ENCODE measurements at regions of chr19 and their contacts with region 1.

Region 1: GRCh38 chr19:19540715-19541440 is 2.8 kb downstream of the CILP2 start:
- DNase-seq: peak in 3 of 6 donors; percentile 35 to 68 (median 55)
- ATAC-seq: peak; percentile 43 to 59 (median 44)
- H3K4me3 ChIP-seq: peak overlapping the region in 1 of 4 donors; percentile 32
- H3K27ac ChIP-seq: no peak overlapping the region
- H3K4me1 ChIP-seq: peaks cover 0 to 15% (median 0%) of the 10 kb centered on the region in 3 donors
- H3K27me3 ChIP-seq: peaks cover 0 to 14% (median 0%) of the 10 kb centered on the region in 4 donors
- CTCF ChIP-seq: no peak

Region 2: DNA sequence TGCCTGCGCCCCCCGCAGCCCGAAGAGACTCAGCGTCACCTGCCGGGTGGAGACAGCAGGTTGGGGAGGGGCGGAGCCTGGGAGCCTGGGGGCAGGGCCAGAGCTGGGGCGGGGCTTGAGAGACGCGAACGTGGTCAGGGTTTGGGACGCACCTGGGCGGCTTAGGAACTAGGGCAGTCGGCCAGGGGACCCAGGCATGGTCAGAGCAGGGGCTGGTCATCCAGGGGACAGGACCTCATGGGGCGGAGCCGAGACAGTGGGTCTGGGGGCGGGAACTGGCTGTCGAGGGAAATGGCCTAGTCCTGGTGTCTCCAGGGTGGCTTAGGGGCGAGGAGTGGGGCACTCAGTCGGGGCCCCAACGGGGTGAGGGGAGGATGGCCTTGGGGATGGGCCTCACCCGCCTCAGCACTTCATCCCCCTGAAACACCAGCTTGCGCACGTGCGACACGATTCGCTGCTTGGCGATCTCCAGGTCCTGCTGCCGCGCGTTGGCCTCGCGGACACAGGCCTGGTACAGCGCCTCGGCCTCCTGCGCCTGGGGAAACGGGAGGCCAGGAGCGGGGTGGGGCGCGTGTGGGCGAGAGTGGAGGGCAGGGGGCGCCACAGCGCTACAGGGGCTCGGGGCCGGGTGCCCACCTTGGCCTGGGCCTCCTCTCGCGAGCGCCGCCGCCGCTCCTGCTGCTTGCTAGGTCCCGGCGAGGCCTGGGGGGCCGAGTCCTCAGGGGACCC is 96.8 kb after region 1 on chr19:
- intact Hi-C with region 1: loop called in 1 of 3 experiments (anchors 10 kb)
- DNase-seq: peak in 1 of 6 donors; percentile 79
- ATAC-seq: peak in 1 of 4 donors; percentile 70
- H3K4me3 ChIP-seq: no peak overlapping the region
- H3K27ac ChIP-seq: no peak overlapping the region
- H3K4me1 ChIP-seq: no peaks in the 10 kb centered on the region
- H3K27me3 ChIP-seq: no peaks in the 10 kb centered on the region
- CTCF ChIP-seq: no peak

Region 3: DNA sequence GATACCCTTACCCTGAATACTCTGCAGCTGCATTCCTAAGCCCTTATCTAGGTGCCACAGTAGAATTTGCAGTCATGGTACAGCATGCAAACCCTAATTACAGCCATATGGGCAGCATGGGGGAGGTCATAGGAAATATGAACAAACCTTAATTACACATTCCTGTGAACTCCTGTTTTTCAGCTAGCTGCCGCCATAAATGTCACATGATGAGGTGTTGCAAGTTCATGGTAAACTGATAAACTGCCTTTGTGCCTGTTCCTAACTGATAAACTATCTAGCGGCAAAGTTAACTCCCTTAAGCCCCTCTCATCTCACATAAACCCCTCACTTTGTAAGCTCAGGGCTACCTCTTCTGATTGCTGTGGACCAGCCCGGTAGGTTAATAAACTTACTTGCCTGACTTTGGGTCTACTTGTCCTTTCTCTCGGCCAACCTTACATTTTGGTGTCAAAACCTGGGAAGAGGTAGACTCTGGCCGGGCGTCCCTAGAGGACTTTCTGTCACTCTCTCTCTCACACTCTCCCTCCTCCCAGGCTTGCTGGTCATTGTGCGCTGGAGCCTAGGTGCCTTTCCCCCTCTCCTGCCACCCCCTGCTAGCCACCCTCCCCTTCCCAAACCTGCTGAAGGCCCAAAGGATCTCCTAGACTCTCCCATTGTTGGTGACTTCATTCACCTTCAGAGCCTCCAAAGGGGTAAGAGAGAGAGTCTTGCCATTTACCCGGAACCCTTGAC is 403.1 kb after region 1 on chr19:
- intact Hi-C with region 1: loop called in 1 of 3 experiments (anchors 10 kb)
- DNase-seq: no peak
- ATAC-seq: no peak
- H3K4me3 ChIP-seq: no peak overlapping the region
- H3K27ac ChIP-seq: no peak overlapping the region
- H3K4me1 ChIP-seq: no peaks in the 10 kb centered on the region
- H3K27me3 ChIP-seq: no peaks in the 10 kb centered on the region
- CTCF ChIP-seq: no peak

Measured in pancreas (tissue), 10 donors.